ENCODE measurements at regions of chr5 and their contacts with region 1.

Region 1: GRCh38 chr5:139341650-139342422 is at the start of gene PAIP2:
- DNase-seq: peak; percentile 96 to 99 (median 97)
- H3K4me3 ChIP-seq: peak within 1 kb of the TSS; percentile 83 to 99
- H3K4me3 Mint-ChIP-seq: peak within 1 kb of the TSS; percentile 94 to 100 (median 97)
- H3K27ac ChIP-seq: peak within 1 kb of the TSS; percentile 98
- H3K27ac Mint-ChIP-seq: peak within 1 kb of the TSS; percentile 97 to 100 (median 99)
- H3K4me1 ChIP-seq: peaks cover 35% of the 10 kb centered on the region
- H3K4me1 Mint-ChIP-seq: peaks cover 35 to 62% (median 51%) of the 10 kb centered on the region in 4 donors
- H3K27me3 ChIP-seq: no peaks in the 10 kb centered on the region
- H3K27me3 Mint-ChIP-seq: no peaks in the 10 kb centered on the region
- total RNA-seq, gene PAIP2: 109 to 112 TPM

Region 2: DNA sequence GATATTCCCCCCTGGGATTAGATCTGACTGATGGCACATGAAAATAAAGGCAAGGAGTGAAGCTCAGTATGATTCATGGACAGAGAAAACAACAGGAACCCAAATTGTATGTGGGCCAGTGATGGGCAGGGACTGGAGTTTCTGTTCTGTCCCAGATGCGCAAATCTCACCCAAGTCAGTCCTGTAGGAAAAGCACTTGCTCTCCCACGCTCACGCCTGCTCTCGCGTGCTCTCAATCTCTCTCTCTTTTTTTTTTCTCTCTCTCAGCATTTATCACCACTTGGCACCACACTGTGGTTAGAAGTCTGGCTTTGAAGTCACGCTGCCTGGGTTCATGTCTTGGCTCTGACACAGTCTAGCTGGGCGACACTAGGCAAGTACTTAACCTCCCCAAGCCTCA is 360.2 kb before region 1 on chr5:
- CTCF ChIA-PET with region 1: no interaction called
- POLR2A ChIA-PET with region 1: no interaction called
- intact Hi-C with region 1: no loop called
- DNase-seq: peak in 4 of 5 donors; percentile 6 to 24 (median 11)
- H3K4me3 ChIP-seq: no peak overlapping the region
- H3K4me3 Mint-ChIP-seq: peak overlapping the region in 7 of 8 donors; percentile 0 to 74 (median 30)
- H3K27ac ChIP-seq: no peak overlapping the region
- H3K27ac Mint-ChIP-seq: peak overlapping the region in 2 of 7 donors; percentile 64 to 83
- H3K4me1 ChIP-seq: peaks cover 32% of the 10 kb centered on the region
- H3K4me1 Mint-ChIP-seq: peaks cover 23 to 42% (median 32%) of the 10 kb centered on the region in 4 donors
- H3K27me3 ChIP-seq: no peaks in the 10 kb centered on the region
- H3K27me3 Mint-ChIP-seq: no peaks in the 10 kb centered on the region

Region 3: GRCh38 chr5:139197710-139198669 is 143.8 kb before region 1 on chr5 and contains the start of gene SIL1:
- CTCF ChIA-PET with region 1: interaction called, 3 read pairs
- POLR2A ChIA-PET with region 1: interaction called, 7 read pairs
- intact Hi-C with region 1: loop called (anchors 2 kb)
- DNase-seq: peak; percentile 90 to 93 (median 91)
- H3K4me3 ChIP-seq: peak within 1 kb of the TSS; percentile 59 to 69
- H3K4me3 Mint-ChIP-seq: peak within 1 kb of the TSS; percentile 87 to 95 (median 89)
- H3K27ac ChIP-seq: peak within 1 kb of the TSS; percentile 86
- H3K27ac Mint-ChIP-seq: peak within 1 kb of the TSS; percentile 84 to 98 (median 94)
- H3K4me1 ChIP-seq: peaks cover 13% of the 10 kb centered on the region
- H3K4me1 Mint-ChIP-seq: peaks cover 13 to 29% (median 19%) of the 10 kb centered on the region in 4 donors
- H3K27me3 ChIP-seq: no peaks in the 10 kb centered on the region
- H3K27me3 Mint-ChIP-seq: no peaks in the 10 kb centered on the region
- total RNA-seq, gene SIL1: 16.4 to 16.7 TPM

Region 4: DNA sequence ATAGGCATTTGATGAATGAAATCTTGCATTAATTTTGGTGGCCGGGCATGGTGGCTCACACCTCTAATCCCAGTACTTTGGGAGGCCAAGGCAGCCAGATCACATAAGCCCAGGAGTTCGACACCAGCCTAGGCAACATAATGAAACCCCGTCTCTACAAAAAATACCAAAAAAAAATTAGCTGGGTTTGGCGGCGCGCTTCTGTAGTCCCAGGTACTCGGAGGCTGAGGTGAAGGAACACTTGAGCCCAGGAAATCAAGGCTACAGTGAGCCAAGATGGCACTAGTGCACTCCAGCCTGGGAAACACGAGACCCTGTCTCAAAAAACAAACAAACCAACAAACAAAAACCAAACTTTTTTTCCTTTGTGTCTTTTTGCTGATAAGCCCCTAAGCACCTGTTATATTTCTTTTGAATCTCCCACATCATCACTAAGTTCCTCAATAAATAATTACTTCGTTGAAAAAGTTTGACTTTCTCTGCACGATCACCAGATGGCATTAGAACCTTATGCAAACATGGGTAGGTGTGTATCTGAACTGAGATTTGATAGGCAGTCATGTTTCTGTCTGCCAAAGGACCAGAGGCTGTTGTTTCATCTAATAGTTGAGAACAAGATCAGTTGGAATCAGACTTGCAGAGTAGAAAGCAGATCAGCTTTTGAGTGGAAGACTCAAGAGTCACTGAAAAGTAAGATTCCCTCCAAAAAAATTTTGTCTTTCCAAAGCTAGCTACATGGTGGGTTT is 53.8 kb before region 1 on chr5:
- CTCF ChIA-PET with region 1: interaction called, 15 read pairs
- POLR2A ChIA-PET with region 1: interaction called, 149 read pairs
- intact Hi-C with region 1: loop called (anchors 1 kb)
- DNase-seq: no peak
- H3K4me3 ChIP-seq: no peak overlapping the region
- H3K4me3 Mint-ChIP-seq: no peak overlapping the region
- H3K27ac ChIP-seq: no peak overlapping the region
- H3K27ac Mint-ChIP-seq: peak overlapping the region in 1 of 7 donors; percentile 30
- H3K4me1 ChIP-seq: peaks cover 6% of the 10 kb centered on the region
- H3K4me1 Mint-ChIP-seq: peaks cover under 1 to 3% (median 3%) of the 10 kb centered on the region in 4 donors
- H3K27me3 ChIP-seq: no peaks in the 10 kb centered on the region
- H3K27me3 Mint-ChIP-seq: no peaks in the 10 kb centered on the region

Region 5: DNA sequence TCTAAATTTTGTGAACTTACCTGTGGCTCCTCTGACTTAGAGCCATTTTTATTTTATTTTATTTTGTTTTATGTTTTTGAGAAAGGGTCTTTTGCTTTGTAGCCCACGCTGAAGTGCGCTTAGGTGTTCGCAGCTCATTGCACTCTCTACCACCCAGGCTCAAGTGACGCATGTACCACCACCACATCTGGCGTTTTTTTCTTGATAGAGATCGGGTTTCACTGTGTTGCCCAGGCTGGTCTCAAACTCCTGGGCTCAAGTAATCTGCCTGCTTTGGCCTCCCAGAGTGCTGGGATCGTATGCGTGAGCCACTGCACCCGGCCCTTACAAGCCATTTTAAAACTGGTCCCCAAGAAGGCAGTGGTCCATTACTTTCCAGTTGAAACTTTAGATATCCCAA is 29.8 kb before region 1 on chr5:
- CTCF ChIA-PET with region 1: interaction called, 3 read pairs
- POLR2A ChIA-PET with region 1: interaction called, 11 read pairs
- intact Hi-C with region 1: no loop called
- DNase-seq: no peak
- H3K4me3 ChIP-seq: no peak overlapping the region
- H3K4me3 Mint-ChIP-seq: peak overlapping the region in 3 of 8 donors; percentile 34 to 60 (median 39)
- H3K27ac ChIP-seq: no peak overlapping the region
- H3K27ac Mint-ChIP-seq: peak overlapping the region in 2 of 7 donors; percentile 17 to 64
- H3K4me1 ChIP-seq: peaks cover 81% of the 10 kb centered on the region
- H3K4me1 Mint-ChIP-seq: peaks cover 46 to 72% (median 56%) of the 10 kb centered on the region in 4 donors
- H3K27me3 ChIP-seq: no peaks in the 10 kb centered on the region
- H3K27me3 Mint-ChIP-seq: no peaks in the 10 kb centered on the region

Region 6: GRCh38 chr5:139403787-139404483 is 62.1 kb after region 1 on chr5 and contains the start of gene SPATA24:
- CTCF ChIA-PET with region 1: interaction called, 6 read pairs
- POLR2A ChIA-PET with region 1: interaction called, 18 read pairs
- intact Hi-C with region 1: loop called (anchors 1 kb)
- DNase-seq: peak; percentile 97 to 98 (median 98)
- H3K4me3 ChIP-seq: peak within 1 kb of the TSS; percentile 71 to 90
- H3K4me3 Mint-ChIP-seq: peak within 1 kb of the TSS; percentile 91 to 99 (median 94)
- H3K27ac ChIP-seq: peak within 1 kb of the TSS; percentile 85
- H3K27ac Mint-ChIP-seq: peak within 1 kb of the TSS; percentile 91 to 100 (median 99)
- H3K4me1 ChIP-seq: peaks cover 20% of the 10 kb centered on the region
- H3K4me1 Mint-ChIP-seq: peaks cover 16 to 31% (median 22%) of the 10 kb centered on the region in 4 donors
- H3K27me3 ChIP-seq: no peaks in the 10 kb centered on the region
- H3K27me3 Mint-ChIP-seq: no peaks in the 10 kb centered on the region
- total RNA-seq, gene SPATA24: 5.6 to 7.5 TPM

Region 7: DNA sequence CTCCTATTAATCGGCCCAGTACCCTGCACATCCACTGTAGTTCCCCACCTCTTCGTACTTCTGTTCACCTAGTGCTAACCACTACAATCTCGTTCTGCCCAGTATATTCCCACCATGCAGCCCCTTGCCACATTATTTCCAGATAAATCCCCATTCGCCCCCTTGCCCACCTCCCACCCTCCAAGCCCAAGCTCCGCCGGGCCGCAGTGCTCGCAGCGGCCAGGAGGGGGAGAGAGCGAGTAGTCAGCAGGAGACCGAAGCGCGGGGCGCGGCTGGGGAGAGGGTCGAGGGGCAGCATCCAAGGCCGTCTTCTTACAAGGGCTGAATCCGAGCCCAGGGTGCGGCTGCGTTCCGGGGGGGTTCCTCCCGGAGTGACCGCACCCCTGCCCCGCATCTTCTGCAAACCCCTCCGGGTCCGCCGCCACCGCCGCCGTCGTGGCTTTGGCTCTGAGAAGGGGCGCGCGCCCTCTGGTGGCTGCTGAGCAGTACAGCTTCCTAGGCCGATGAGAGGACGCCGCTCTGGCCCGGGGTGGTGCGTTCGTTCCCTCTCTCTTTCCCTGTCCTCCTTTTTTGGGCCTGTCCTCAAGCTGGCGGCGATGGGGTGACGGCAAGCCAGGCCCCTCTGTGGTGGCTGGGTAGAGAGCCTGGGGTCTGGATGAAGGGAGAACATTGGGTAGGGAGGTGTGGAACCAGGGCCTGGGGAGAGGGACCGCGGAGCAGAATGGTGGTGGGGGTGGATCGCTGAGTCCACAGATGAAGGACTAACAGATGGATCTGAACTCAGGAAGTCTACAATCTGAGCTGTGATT is 423.8 kb after region 1 on chr5:
- CTCF ChIA-PET with region 1: no interaction called
- POLR2A ChIA-PET with region 1: no interaction called
- intact Hi-C with region 1: no loop called
- DNase-seq: peak; percentile 78 to 87 (median 84)
- H3K4me3 ChIP-seq: peak overlapping the region; percentile 23 to 56
- H3K4me3 Mint-ChIP-seq: peak overlapping the region; percentile 25 to 72 (median 54)
- H3K27ac ChIP-seq: no peak overlapping the region
- H3K27ac Mint-ChIP-seq: peak overlapping the region in 5 of 7 donors; percentile 31 to 66 (median 52)
- H3K4me1 ChIP-seq: peaks cover 9% of the 10 kb centered on the region
- H3K4me1 Mint-ChIP-seq: peaks cover 5 to 8% (median 7%) of the 10 kb centered on the region in 4 donors
- H3K27me3 ChIP-seq: peaks cover 19% of the 10 kb centered on the region
- H3K27me3 Mint-ChIP-seq: peaks cover 19 to 33% of the 10 kb centered on the region in 2 donors